ENCODE measurements at regions of chr14 and their contacts with region 1.

Region 1: GRCh38 chr14:60622917-60623257 is 26.4 kb downstream of the SIX1 start:
- DNase-seq: no peak
- ATAC-seq: no peak
- H3K4me3 ChIP-seq: no peak overlapping the region
- H3K27ac ChIP-seq: no peak overlapping the region
- H3K4me1 ChIP-seq: peaks cover 6% of the 10 kb centered on the region; the same call in 2 of the 3 replicates
- CTCF ChIP-seq: no peak
- EP300 ChIP-seq: no peak
- POLR2A ChIP-seq: no peak
- RAD21 ChIP-seq: no peak

Region 2: GRCh38 chr14:60636879-60637478 is 14.1 kb after region 1 on chr14:
- CTCF ChIA-PET with region 1: interaction called, 18 read pairs
- POLR2A ChIA-PET with region 1: no interaction called
- DNase-seq: no peak
- ATAC-seq: no peak
- H3K4me3 ChIP-seq: no peak overlapping the region
- H3K27ac ChIP-seq: no peak overlapping the region
- H3K4me1 ChIP-seq: no peaks in the 10 kb centered on the region; the same call in 2 of the 3 replicates
- CTCF ChIP-seq: no peak
- EP300 ChIP-seq: no peak
- POLR2A ChIP-seq: no peak
- RAD21 ChIP-seq: no peak

Region 3: GRCh38 chr14:60642270-60643140 is 19.6 kb after region 1 on chr14:
- CTCF ChIA-PET with region 1: interaction called, 16 read pairs
- POLR2A ChIA-PET with region 1: no interaction called
- DNase-seq: no peak
- ATAC-seq: no peak
- H3K4me3 ChIP-seq: no peak overlapping the region
- H3K27ac ChIP-seq: no peak overlapping the region
- H3K4me1 ChIP-seq: peaks cover 15% of the 10 kb centered on the region; the same call in 1 of the 3 replicates
- CTCF ChIP-seq: no peak
- EP300 ChIP-seq: no peak
- POLR2A ChIP-seq: no peak
- RAD21 ChIP-seq: no peak

Region 4: GRCh38 chr14:61025251-61026223 is 402.6 kb after region 1 on chr14:
- CTCF ChIA-PET with region 1: interaction called, 12 read pairs
- POLR2A ChIA-PET with region 1: no interaction called
- DNase-seq: peak; percentile 31 to 76
- ATAC-seq: peak; percentile 81 to 91
- H3K4me3 ChIP-seq: no peak overlapping the region
- H3K27ac ChIP-seq: peak overlapping the region; percentile 18 to 48; a peak in 3 of 6 replicates
- H3K4me1 ChIP-seq: peaks cover 20% of the 10 kb centered on the region
- CTCF ChIP-seq: peak; percentile 92
- EP300 ChIP-seq: no peak
- POLR2A ChIP-seq: no peak
- RAD21 ChIP-seq: peak; percentile 85 to 87

Region 5: DNA sequence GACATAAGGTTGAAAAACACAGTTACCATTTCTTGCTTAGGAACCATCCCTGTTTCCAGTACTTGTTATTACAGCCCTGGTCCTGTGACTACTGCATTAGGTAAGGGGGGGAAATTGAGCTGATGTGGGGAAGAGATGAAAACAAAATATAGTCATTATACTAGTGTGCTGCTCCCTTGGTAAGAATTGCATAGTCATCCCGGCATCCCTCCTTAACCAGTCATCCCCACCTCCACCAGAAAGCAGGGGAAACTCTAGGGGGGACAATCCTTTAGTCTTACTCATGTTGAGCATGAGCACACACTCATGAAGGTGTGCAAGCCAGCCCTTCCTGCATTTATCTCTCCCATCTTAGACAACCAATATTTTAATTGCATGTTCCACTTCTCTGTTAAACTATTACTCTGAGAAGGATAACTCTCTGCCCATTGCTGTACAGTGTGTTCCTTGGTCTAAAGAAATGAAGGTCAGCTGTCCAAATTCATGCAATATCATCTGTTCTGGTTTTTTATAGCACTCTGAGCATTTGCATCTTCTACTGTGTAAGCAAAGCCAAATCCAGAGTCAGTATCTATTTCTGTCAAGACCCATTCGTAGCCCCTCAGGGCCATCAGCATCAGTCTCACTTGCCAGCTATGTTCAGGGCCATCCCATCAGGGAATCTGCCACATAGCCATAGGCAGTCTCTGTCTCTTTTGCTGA is 611.5 kb after region 1 on chr14:
- CTCF ChIA-PET with region 1: interaction called, 15 read pairs
- POLR2A ChIA-PET with region 1: no interaction called
- DNase-seq: no peak
- ATAC-seq: no peak
- H3K4me3 ChIP-seq: no peak overlapping the region
- H3K27ac ChIP-seq: no peak overlapping the region; a peak in 1 of 6 replicates
- H3K4me1 ChIP-seq: peaks cover 6% of the 10 kb centered on the region; the same call in 1 of the 3 replicates
- CTCF ChIP-seq: no peak
- EP300 ChIP-seq: no peak
- POLR2A ChIP-seq: no peak
- RAD21 ChIP-seq: no peak

Region 6: DNA sequence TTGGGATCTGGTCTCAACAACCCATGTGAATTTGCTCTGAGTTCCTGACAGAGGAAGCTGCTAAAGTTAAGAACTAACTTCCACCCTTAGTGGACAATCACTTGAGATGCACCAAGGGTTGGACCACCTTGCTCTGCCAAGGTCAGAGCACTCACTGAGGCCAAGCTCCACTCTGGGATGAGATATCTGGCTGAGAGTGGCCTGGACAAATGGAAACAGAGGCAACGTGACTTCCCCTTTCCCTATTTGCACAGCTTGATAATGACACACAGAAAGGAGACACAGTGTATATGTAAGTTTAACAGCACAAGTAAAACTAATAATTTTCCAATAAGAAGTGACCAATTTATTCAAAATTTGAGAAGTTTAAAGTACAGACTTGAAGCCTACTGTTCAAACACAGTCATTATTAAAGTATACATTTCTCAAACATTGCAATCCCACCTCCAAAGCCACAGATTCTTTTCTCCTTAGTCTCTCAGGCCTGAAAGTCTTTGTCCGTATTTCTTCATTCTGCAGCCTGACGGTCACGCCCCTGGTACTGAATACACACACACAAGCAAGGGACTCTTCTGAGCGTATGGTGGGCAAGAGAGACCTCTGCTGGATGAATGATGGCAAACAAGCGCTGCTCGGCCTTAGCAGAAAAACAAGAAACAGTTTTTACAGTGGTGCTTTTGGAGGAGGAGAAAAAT is 629.6 kb after region 1 on chr14:
- CTCF ChIA-PET with region 1: interaction called, 78 read pairs
- POLR2A ChIA-PET with region 1: no interaction called
- DNase-seq: peak; percentile 83 to 88
- ATAC-seq: peak; percentile 98 to 99
- H3K4me3 ChIP-seq: no peak overlapping the region
- H3K27ac ChIP-seq: peak overlapping the region; percentile 55 to 73
- H3K4me1 ChIP-seq: peaks cover 9% of the 10 kb centered on the region
- CTCF ChIP-seq: peak; percentile 94
- EP300 ChIP-seq: no peak
- POLR2A ChIP-seq: no peak
- RAD21 ChIP-seq: peak; percentile 98 to 99

Region 7: GRCh38 chr14:61287196-61287595 is 664.3 kb after region 1 on chr14:
- CTCF ChIA-PET with region 1: interaction called, 15 read pairs
- POLR2A ChIA-PET with region 1: no interaction called
- DNase-seq: no peak
- ATAC-seq: no peak
- H3K4me3 ChIP-seq: no peak overlapping the region
- H3K27ac ChIP-seq: no peak overlapping the region
- H3K4me1 ChIP-seq: peaks cover 20% of the 10 kb centered on the region
- CTCF ChIP-seq: no peak
- EP300 ChIP-seq: no peak
- POLR2A ChIP-seq: no peak
- RAD21 ChIP-seq: no peak

Measured in A549 (cell line).